Activated CD4-positive, alpha-beta memory T cell treated with anti-CD3 and anti-CD28 coated beads for 36 hours (primary cell): ENCODE measurements at regions of chr19 and their contacts with region 1.

Region 1: GRCh38 chr19:55385740-55386529 is at the start of gene RPL28:
- DNase-seq: peak; percentile 99
- H3K4me3 Mint-ChIP-seq: peak within 1 kb of the TSS; percentile 96
- H3K27ac Mint-ChIP-seq: peak within 1 kb of the TSS; percentile 92
- H3K4me1 Mint-ChIP-seq: peaks cover 59% of the 10 kb centered on the region
- H3K27me3 Mint-ChIP-seq: no peaks in the 10 kb centered on the region
- total RNA-seq, gene RPL28: 2,630 to 2,642 TPM

Region 2: GRCh38 chr19:55398200-55398925 is 12.4 kb after region 1 on chr19:
- CTCF ChIA-PET with region 1: interaction called, 6 read pairs
- POLR2A ChIA-PET with region 1: interaction called, 118 read pairs
- intact Hi-C with region 1: loop called (anchors 1 kb)
- DNase-seq: no peak
- H3K4me3 Mint-ChIP-seq: peak overlapping the region; percentile 34
- H3K27ac Mint-ChIP-seq: peak overlapping the region; percentile 33
- H3K4me1 Mint-ChIP-seq: peaks cover 20% of the 10 kb centered on the region
- H3K27me3 Mint-ChIP-seq: no peaks in the 10 kb centered on the region

Region 3: DNA sequence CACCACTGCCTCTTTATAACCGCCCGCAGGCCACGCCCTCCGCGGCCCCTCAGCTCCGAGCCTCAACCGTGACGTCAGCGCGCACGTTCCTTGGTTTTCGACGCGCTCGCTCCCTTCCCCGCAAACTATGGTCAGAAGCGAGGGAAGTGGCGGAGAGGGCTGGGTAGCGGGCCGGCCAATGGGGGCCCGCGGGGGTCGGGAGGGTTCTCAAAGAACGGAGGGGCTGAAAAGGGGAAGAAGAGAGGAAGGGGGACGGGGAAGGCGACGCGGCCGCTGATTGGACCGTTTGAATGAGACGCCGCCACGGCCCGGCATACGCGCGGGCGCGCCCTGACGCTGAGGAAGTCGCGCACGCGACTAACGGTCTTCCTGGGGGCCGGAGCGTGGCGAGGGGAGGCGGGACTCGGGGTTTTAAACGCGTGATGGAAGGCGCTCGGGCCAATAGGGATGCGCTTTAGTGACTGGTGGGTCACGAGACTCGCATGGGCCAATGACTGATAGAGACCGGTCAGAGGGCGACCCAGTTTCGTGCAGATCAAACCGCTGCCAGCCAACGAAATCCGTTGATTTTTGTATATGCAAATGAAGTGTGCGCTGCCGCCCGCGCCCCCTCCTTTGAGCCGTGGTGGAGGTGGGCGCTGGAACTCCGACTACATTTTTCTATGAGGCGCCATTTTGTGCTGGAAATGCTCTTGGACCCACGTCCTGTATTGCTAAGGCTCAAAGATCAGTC is 22.0 kb after region 1 on chr19:
- CTCF ChIA-PET with region 1: no interaction called
- POLR2A ChIA-PET with region 1: interaction called, 118 read pairs
- intact Hi-C with region 1: loop called (anchors 1 kb)
- DNase-seq: peak; percentile 98
- H3K4me3 Mint-ChIP-seq: peak overlapping the region; percentile 90
- H3K27ac Mint-ChIP-seq: peak overlapping the region; percentile 97
- H3K4me1 Mint-ChIP-seq: peaks cover 26% of the 10 kb centered on the region
- H3K27me3 Mint-ChIP-seq: no peaks in the 10 kb centered on the region

Region 4: DNA sequence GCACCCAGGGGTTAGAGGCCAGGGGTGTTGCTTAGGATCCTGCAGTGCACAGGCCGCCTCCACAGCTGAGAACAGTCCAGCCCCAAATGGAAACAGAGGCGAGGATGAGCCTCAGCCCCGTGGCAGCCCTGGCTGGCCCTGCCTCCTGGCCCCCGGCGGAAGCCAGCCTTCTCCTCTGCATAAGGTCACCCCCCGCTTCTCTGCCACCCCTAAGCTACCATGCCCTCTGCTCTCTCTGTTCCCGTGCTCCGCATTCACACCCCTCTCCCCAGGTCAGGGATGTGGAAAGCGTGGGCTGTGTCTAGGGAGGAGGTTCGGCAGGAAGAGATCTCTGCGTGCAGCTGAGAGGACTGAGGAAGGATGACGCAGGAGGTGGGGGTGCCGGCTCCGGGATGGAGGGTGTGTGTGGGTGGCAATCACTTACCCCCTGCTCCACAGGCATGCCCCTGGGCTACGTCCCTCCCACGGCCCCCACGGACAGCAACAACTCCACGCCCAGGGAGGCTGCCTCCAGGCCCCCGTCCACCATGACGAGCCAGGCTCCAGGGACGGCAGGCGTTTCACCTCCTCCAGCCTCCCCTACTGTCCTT is 108.3 kb after region 1 on chr19:
- CTCF ChIA-PET with region 1: no interaction called
- POLR2A ChIA-PET with region 1: no interaction called
- intact Hi-C with region 1: no loop called
- DNase-seq: no peak
- H3K4me3 Mint-ChIP-seq: no peak overlapping the region
- H3K27ac Mint-ChIP-seq: no peak overlapping the region
- H3K4me1 Mint-ChIP-seq: no peaks in the 10 kb centered on the region
- H3K27me3 Mint-ChIP-seq: peaks cover 12% of the 10 kb centered on the region

Region 5: GRCh38 chr19:55643348-55644176 is 257.6 kb after region 1 on chr19 and contains the start of gene ZNF581:
- CTCF ChIA-PET with region 1: no interaction called
- POLR2A ChIA-PET with region 1: no interaction called
- intact Hi-C with region 1: loop called (anchors 2 kb)
- DNase-seq: peak; percentile 90
- H3K4me3 Mint-ChIP-seq: peak within 1 kb of the TSS; percentile 85
- H3K27ac Mint-ChIP-seq: peak within 1 kb of the TSS; percentile 98
- H3K4me1 Mint-ChIP-seq: peaks cover 46% of the 10 kb centered on the region
- H3K27me3 Mint-ChIP-seq: no peaks in the 10 kb centered on the region
- total RNA-seq, gene ZNF581: 19.2 to 20.1 TPM